ENCODE measurements at regions of chr20 and their contacts with region 1.

Region 1: DNA sequence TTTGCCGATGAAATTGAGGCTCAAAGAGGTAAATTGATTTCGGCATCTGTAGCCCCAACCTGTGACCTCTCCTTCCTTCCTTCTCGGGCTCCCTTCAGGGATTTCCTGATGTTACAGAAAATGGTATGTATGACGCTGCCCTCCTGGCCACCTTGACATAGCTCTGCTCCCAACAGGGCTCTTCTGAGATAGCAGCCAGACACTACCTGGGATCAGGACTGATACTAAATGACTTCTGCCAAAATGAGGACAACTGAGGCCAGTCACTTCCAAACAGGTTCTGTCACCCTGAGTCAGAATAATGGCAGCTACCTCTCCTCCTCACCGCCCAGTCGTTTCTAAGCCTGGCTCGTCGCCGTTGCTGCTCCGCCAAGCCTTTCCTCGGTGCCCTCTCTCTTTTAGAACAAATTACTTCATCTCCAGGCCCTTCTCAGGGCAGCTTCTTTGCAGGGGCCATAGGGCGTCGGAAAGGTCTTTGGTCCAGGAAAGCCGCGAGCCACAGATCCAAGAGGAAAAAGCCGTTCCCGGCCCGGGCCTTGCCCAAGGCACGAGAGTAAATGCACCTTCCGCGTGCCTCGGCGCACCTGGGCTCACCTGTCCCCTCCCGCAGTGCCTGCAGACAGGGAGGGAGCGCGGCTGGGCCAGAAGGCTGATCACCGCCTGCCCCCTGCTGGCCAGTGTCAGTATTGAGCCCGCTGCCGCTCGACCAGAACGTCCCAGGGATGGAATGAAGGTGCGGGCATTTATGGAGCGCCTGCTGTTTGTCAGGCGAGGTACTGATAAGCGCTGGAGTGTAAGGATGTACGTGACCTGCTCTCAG is 904 bp upstream of the LPIN3 start:
- DNase-seq: peak; percentile 95
- H3K27ac ChIP-seq: peak overlapping the region; percentile 83
- CTCF ChIP-seq: peak; percentile 100

Region 2: GRCh38 chr20:41136680-41137613 is 202.8 kb before region 1 on chr20 and contains the start of gene PLCG1:
- CTCF ChIA-PET with region 1: interaction called, 12 read pairs
- POLR2A ChIA-PET with region 1: no interaction called
- DNase-seq: peak; percentile 99
- H3K27ac ChIP-seq: peak within 1 kb of the TSS; percentile 91
- CTCF ChIP-seq: no peak

Region 3: DNA sequence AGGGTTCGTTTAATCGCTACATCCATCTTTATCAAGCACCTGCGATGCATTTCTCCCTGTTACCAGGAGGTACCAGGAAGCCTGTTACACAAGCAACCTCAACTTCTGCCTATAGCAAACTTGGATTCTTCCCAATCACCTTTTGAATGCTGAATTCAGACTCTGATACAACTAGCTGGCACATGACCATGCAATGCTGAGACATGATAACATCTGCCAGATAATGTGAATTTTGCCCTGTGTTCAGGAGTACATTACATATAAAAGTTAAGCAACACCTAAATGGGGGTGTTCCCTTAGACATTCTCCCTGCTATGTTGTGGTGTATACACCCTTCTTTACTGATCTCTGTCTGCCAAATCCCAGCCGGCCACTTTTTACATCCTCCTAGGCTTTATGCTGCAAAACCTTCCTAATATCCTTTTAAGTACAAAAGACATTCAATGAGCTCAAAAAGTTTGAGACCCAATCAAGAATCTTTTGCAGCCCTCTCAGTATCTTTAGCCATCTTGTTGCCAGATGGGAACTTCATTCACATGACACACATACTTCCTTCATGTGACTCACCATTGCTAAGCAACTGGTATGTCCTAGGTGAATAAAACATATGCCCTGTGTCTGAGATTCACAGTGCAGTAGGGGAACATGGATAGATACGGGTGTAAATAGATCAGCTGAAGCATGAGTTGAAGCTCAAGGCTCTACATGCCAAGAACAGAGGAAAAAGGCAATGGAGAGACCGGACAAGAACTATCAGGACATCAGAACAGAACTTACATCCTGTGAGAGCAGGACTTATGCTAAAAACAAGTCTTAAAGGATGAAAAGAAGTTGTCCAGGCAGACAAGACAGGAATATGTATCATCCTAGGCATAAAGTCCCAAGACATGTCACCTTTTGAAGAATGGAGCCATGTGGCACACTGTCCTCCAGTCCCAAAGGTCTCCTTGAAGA is 106.5 kb before region 1 on chr20:
- CTCF ChIA-PET with region 1: interaction called, 21 read pairs
- POLR2A ChIA-PET with region 1: no interaction called
- DNase-seq: peak; percentile 95
- H3K27ac ChIP-seq: peak overlapping the region; percentile 96
- CTCF ChIP-seq: no peak

Region 4: GRCh38 chr20:41371371-41371770 is 31.7 kb after region 1 on chr20:
- CTCF ChIA-PET with region 1: no interaction called
- POLR2A ChIA-PET with region 1: no interaction called
- DNase-seq: no peak
- H3K27ac ChIP-seq: no peak overlapping the region
- CTCF ChIP-seq: no peak

Region 5: GRCh38 chr20:41411391-41411847 is 71.7 kb after region 1 on chr20:
- CTCF ChIA-PET with region 1: interaction called, 10 read pairs
- POLR2A ChIA-PET with region 1: no interaction called
- DNase-seq: peak; percentile 37
- H3K27ac ChIP-seq: no peak overlapping the region
- CTCF ChIP-seq: no peak; the same call in 1 of the 2 replicates